A673 (cell line): ENCODE measurements at regions of chr2 and their contacts with region 1.

Region 1: DNA sequence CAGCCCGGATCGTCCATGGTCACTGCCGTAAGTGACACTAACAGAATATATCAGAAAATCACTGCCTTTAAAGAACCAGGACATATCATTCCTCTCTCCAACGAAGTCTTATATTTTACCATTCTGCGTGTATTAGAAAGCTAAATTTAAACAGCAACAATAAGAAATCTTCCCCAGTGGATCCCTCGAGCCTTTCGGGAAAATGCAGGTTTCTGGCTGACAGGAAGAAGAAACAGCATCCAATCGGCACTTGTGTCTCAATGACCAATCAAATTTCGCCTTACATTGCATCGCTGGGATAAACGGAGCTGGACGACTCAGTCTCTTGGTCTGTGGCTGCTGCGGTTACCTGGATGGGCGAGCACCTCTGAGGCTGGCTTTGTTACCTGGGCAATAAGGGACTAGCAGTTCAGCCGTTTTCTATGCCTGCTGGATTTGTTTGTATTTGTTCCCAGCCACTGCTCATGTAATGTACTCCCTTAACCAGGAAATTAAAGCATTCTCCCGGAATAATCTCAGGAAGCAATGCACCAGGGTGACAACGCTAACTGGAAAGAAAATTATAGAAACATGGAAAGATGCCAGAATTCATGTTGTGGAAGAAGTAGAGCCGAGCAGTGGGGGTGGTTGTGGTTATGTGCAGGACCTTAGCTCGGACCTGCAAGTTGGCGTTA is at the start of gene DUSP19:
- DNase-seq: peak; percentile 93
- H3K4me3 ChIP-seq: peak within 1 kb of the TSS; percentile 67
- H3K27ac ChIP-seq: peak within 1 kb of the TSS; percentile 66
- H3K4me1 ChIP-seq: peaks cover 10% of the 10 kb centered on the region
- H3K27me3 ChIP-seq: no peaks in the 10 kb centered on the region
- CTCF ChIP-seq: no peak
- total RNA-seq, gene DUSP19: 5.2 and 6.4 TPM in 2 replicates

Region 2: DNA sequence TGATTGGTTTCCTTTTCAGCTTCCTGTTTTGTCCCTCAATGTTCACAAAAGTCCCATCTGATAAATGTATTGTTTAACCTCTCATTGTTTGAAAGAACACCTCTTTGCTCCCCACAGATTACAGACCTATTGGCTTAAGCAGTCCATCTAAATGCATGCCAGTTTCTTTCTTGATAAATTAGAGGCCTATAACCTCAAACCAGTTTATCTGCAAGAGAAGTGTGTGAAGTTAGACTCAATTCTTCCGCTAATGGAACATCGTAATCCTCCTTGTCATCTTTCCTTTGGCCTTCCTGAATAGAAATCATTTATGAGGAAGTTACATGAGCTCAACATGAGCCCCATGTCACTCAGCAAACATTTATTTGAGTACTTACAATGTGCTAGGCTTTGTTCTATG is 286.2 kb before region 1 on chr2:
- CTCF ChIA-PET with region 1: no interaction called
- POLR2A ChIA-PET with region 1: no interaction called
- intact Hi-C with region 1: no loop called
- DNase-seq: no peak
- H3K4me3 ChIP-seq: no peak overlapping the region
- H3K27ac ChIP-seq: no peak overlapping the region
- H3K4me1 ChIP-seq: peaks cover 16% of the 10 kb centered on the region
- H3K27me3 ChIP-seq: no peaks in the 10 kb centered on the region
- CTCF ChIP-seq: no peak

Region 3: DNA sequence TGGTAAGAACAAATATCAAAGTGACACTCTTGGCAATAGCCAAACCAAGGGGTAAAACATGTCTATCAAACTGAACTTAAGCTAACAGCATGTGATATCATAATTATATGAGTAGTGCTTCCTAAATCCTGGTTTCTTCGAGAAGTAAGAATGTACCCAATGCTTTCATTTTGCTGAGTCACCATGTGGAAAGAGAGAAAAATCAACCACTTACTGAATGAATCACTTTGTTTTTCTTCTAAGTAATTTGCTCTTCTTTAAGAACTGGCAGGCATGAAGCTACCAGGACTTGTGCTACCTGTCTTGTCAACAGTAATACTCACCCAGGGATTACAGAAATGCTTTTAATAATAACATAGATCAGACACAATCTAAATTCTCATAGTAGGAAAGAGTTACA is 19.0 kb before region 1 on chr2:
- CTCF ChIA-PET with region 1: no interaction called
- POLR2A ChIA-PET with region 1: interaction called, 22 read pairs
- intact Hi-C with region 1: no loop called
- DNase-seq: peak; percentile 22
- H3K4me3 ChIP-seq: no peak overlapping the region
- H3K27ac ChIP-seq: peak overlapping the region; percentile 39
- H3K4me1 ChIP-seq: no peaks in the 10 kb centered on the region
- H3K27me3 ChIP-seq: no peaks in the 10 kb centered on the region
- CTCF ChIP-seq: no peak

Region 4: DNA sequence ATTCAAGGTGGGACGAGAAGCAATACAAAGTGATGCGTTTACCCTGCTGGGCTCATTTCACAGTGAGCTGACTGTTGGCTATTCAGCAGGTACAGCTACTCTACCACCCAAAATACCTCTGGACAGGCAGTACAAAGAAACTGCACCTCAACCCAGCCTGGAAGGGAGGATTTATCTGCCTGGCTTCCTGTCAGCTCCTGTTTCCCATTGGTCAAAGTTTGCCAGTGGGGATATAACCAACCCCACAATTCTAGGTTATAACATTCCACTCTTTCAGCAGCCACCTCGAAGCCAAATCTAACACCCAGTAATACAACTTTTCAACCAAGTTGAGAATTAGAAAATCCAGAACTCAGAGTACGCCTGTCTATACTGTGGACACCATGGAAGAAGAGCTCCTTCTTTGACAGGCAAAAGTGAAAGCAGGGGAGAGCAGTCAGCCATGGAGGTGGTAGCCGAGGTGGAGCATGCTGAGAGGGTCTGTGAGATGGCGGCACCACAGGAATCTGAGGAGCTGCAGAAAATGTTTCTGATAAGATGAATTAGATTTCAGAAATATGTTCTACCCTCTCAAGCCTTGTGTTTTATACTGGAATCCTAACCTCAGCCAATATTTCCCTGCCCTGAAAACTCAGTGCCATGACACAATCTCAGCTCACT is 10.7 kb after region 1 on chr2:
- CTCF ChIA-PET with region 1: no interaction called
- POLR2A ChIA-PET with region 1: interaction called, 13 read pairs
- intact Hi-C with region 1: no loop called
- DNase-seq: no peak
- H3K4me3 ChIP-seq: no peak overlapping the region
- H3K27ac ChIP-seq: no peak overlapping the region
- H3K4me1 ChIP-seq: no peaks in the 10 kb centered on the region
- H3K27me3 ChIP-seq: no peaks in the 10 kb centered on the region
- CTCF ChIP-seq: no peak